WTC11 (cell line): ENCODE measurements at regions of chr9 and their contacts with region 1.

Region 1: DNA sequence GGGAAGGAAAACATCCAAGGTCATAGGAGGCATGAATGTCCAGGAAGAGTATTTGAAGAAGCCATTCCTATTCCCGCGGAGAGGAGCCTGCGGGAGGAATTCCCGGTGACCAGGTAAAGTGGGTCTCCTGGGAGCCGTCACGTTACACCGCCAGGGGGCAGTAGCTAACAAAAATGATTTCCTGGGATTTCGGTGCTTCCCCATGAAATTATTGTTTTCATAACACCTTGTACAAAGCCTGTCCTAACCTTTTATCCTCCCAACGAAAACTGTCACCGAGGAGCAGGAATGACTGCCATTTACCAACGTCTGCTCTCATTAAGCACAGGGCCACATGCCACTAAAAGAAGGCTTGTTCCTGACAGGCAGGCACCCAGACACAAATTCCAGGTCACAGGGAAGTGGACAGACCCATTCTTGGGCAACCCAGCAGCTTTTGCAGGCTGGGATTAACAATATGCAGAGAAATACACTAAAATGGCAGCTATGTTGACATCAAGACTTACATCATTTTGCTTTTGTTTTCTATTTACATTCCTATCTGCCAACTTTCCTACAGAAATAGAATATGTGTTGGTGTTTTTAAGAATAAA is 41.2 kb upstream of the CTSL start:
- DNase-seq: peak; percentile 69
- ATAC-seq: peak; percentile 71
- H3K4me3 Mint-ChIP-seq: no peak overlapping the region
- H3K27ac Mint-ChIP-seq: peak overlapping the region; percentile 78; the same call in 1 of the 2 replicates
- H3K4me1 Mint-ChIP-seq: peaks cover 11% of the 10 kb centered on the region
- H3K27me3 Mint-ChIP-seq: no peaks in the 10 kb centered on the region
- CTCF ChIP-seq: peak; percentile 61; the same call in 1 of the 2 replicates

Region 2: DNA sequence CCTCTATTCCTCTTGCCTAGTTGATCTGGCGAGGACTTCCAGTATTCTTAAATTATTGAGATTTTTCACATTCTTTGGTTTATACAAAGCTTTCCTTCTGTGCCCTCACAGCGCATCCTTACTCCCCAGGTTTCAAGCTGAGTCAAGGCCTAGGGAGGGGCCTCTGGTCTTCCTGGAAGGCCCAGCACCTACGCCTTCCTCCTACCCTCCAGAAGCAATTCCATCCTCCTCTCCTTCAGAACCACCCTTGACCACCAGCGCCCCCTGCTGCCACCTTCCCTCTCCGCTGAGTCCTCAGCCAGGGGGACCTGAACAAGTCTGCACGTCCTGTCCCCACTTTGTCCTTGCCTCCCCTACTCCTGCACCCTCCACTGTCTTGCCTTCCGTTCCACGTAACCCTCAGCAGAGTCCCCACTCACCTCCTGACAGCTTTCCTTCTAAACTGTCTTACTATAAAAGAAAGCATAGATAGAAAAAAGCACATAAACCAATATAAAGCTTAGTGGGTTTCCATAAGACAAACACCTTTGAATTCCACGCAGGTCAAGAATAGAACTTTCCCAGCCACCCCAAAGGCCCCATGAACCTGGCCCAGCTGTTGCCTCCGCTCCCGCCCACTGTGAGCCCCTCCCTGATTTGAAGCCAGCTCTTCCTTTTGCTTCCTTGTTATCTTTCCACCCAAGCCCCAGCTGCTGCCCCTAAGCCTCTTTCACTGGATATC is 21.8 kb before region 1 on chr9:
- CTCF ChIA-PET with region 1: no interaction called
- POLR2A ChIA-PET with region 1: no interaction called
- DNase-seq: peak; percentile 94
- ATAC-seq: peak; percentile 92
- H3K4me3 Mint-ChIP-seq: no peak overlapping the region
- H3K27ac Mint-ChIP-seq: peak overlapping the region; percentile 21; the same call in 1 of the 2 replicates
- H3K4me1 Mint-ChIP-seq: peaks cover 24% of the 10 kb centered on the region
- H3K27me3 Mint-ChIP-seq: no peaks in the 10 kb centered on the region
- CTCF ChIP-seq: peak; percentile 71

Region 3: GRCh38 chr9:87673459-87674120 is 11.1 kb before region 1 on chr9:
- CTCF ChIA-PET with region 1: interaction called, 16 read pairs
- POLR2A ChIA-PET with region 1: no interaction called
- DNase-seq: no peak
- ATAC-seq: no peak
- H3K4me3 Mint-ChIP-seq: no peak overlapping the region
- H3K27ac Mint-ChIP-seq: no peak overlapping the region
- H3K4me1 Mint-ChIP-seq: peaks cover 3% of the 10 kb centered on the region
- H3K27me3 Mint-ChIP-seq: no peaks in the 10 kb centered on the region
- CTCF ChIP-seq: no peak

Region 4: DNA sequence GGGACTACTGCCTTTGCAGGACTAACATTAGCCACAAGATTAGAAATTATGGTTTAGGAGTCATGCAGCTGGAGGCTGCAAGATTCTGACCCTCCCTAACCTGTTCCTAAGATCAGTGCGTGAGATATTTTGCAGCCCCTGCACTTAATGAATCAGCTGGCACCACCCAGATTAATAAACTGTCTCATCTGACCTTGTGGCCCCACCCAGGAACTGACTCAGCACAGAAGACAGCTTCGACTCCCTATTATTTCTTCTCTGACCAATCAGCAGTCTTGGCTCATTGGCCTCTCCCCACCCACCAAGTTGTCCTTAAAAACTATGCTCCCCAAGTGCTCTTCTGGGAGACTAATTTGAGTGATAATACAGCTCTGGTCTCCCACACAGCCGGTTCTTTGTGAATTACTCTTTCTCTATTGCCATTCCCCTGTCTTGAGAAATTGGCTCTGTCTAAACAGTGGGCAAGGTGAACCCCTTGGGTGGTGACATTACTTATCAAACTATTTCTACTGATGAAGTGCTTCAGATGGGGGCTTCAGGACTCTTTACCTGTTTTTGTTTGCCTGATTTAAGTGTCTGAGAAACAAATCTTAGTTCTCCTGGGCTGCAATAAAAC is 58.2 kb after region 1 on chr9:
- CTCF ChIA-PET with region 1: no interaction called
- POLR2A ChIA-PET with region 1: no interaction called
- DNase-seq: no peak
- ATAC-seq: no peak
- H3K4me3 Mint-ChIP-seq: no peak overlapping the region
- H3K27ac Mint-ChIP-seq: no peak overlapping the region
- H3K4me1 Mint-ChIP-seq: peaks cover 4% of the 10 kb centered on the region
- H3K27me3 Mint-ChIP-seq: no peaks in the 10 kb centered on the region; the same call in none of the 2 replicates
- CTCF ChIP-seq: no peak

Region 5: GRCh38 chr9:87812375-87813118 is 127.8 kb after region 1 on chr9:
- CTCF ChIA-PET with region 1: interaction called, 22 read pairs
- POLR2A ChIA-PET with region 1: no interaction called
- DNase-seq: peak; percentile 49
- ATAC-seq: peak; percentile 90; the same call in 1 of the 2 replicates
- H3K4me3 Mint-ChIP-seq: no peak overlapping the region
- H3K27ac Mint-ChIP-seq: no peak overlapping the region
- H3K4me1 Mint-ChIP-seq: no peaks in the 10 kb centered on the region
- H3K27me3 Mint-ChIP-seq: peaks cover 15% of the 10 kb centered on the region
- CTCF ChIP-seq: peak; percentile 76